Right lobe of liver (tissue), 6 donors: ENCODE measurements at regions of chr9 and their contacts with region 1.

Region 1: DNA sequence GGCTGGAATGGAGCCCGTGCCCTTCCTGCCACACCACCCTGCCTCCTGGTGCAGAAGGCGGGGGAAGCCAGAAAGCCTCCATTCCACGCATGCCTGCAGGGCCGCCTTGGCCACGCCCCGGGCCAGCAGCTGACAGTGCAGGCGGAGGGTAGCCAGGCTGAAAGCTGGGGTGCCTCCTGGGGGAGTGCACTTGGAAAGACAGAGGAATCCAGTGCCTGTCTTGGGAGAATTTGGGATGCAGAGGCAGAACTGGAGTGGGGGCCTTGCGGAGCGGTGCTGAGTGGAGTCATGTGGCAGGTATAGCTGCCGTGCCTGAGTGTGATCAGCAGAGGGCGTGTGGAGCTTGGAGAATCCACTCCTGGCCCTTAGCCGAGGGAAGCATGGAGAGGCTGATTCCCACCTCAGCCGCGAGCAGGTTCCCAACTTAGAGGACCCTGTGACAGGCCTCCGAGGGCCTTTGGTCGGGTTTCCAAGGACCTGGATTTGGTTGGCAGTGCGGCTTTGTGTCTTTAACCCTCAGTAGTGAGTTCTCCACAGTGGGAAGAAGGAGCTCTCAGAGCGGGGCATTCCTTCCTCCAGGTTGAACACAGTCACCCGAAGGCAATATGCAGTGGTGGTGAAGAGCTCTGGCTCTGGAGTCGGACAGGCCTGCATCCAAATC is 9.1 kb upstream of the URM1 start:
- DNase-seq: peak; percentile 80 to 84 (median 81)
- ATAC-seq: peak; percentile 94 to 97 (median 95)
- H3K4me3 ChIP-seq: peak overlapping the region; percentile 42 to 54 (median 43)
- H3K27ac ChIP-seq: no peak overlapping the region
- H3K4me1 ChIP-seq: peaks cover 0 to 11% (median 0%) of the 10 kb centered on the region in 4 donors
- H3K27me3 ChIP-seq: no peaks in the 10 kb centered on the region
- CTCF ChIP-seq: peak; percentile 80 to 87 (median 84)
- POLR2A ChIP-seq: no peak

Region 2: GRCh38 chr9:128067876-128068613 is 294.1 kb before region 1 on chr9 and contains the start of gene SLC25A25:
- intact Hi-C with region 1: no loop called
- DNase-seq: peak; percentile 100
- ATAC-seq: peak; percentile 84 to 92 (median 85)
- H3K4me3 ChIP-seq: peak within 1 kb of the TSS; percentile 86 to 96 (median 88)
- H3K27ac ChIP-seq: peak within 1 kb of the TSS; percentile 93 to 95 (median 94)
- H3K4me1 ChIP-seq: peaks cover 0 to 55% (median 23%) of the 10 kb centered on the region in 4 donors
- H3K27me3 ChIP-seq: no peaks in the 10 kb centered on the region
- CTCF ChIP-seq: peak in 1 of 4 donors; percentile 4
- POLR2A ChIP-seq: peak; percentile 97
- total RNA-seq, gene SLC25A25: 21.2 to 81.5 (median 53.3) TPM

Region 3: DNA sequence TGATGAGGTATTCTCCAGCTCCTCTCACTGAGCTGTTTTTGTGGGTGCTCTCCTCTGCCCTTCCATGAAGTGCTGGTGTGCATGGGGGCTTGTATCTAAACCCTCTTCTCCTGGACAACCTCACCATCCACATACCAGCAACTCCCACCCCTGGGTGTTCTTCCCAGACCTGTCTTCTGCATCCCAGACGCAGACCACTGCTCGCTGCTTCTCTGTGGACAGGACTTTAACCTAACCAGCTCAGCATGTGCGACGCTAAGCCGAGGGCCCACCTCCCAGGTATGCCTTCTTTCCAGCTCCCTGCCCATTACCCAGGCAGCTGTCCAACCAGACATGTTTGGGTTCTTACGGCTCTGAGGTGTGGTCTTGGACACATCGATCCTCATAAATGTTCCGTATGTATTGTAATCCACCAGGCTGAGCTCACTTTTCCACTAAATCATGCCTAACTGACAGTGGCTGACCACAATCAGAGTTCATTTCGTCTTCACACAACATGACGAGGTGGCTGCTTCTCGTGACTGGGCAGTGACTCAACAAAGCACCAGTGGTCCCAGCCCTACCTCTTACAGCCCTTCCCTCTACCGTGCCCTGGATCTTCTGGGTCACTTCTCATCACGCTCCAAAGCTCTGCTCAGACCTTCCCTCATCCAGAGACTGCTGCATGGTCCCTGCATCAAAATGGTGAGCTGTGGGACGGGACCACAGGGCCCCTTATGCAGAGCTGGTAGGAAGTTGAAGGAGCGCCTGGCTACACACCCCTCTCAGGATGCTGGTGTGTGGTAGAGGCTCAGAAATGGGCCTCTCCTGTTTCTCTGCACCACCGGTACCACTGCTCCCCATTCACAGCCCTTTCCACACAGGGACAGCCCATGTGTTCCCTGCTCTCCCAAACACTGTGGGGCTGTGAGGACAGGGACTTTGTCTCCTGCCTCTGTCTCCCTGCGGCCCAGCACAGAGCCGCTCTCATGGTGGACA is 225.0 kb before region 1 on chr9:
- intact Hi-C with region 1: no loop called
- DNase-seq: peak; percentile 8 to 42 (median 40)
- ATAC-seq: peak in 3 of 4 donors; percentile 7 to 10 (median 10)
- H3K4me3 ChIP-seq: no peak overlapping the region
- H3K27ac ChIP-seq: no peak overlapping the region
- H3K4me1 ChIP-seq: no peaks in the 10 kb centered on the region
- H3K27me3 ChIP-seq: no peaks in the 10 kb centered on the region
- CTCF ChIP-seq: no peak
- POLR2A ChIP-seq: no peak

Region 4: DNA sequence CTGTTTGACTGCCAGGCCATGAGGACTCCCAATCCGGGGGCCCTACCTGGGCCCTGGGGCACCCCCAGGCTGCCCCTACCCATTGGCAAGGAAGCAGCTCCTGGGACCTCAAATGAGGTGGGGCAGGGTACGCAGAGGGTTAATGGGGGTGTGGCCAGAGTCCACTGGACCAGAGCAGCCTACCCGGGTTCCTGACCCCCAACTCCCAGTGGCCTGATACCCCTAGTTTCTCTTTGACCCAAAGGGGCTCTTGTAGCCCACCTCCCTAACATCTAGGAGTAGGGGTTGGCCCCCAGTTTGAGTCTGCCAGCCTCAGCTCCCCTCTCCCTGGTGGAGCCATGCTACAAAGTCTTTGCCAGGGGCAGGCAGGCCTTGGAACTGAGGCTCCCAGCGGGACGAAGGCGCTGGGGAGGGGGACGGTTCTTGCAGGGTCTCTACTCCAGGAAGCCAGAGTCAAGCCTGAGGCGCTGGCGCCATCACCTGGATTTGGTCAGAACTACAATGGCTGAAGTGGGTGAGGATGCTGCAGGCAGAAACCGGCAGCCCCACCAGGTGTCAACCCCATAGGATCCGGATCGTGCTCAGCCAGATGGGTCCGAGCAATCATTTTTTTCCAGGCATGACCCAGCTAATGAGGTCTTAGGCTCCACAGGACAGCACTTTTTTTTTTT is 50.1 kb after region 1 on chr9:
- intact Hi-C with region 1: loop called in 1 of 2 experiments (anchors 10 kb)
- DNase-seq: no peak
- ATAC-seq: peak; percentile 37 to 46 (median 42)
- H3K4me3 ChIP-seq: no peak overlapping the region
- H3K27ac ChIP-seq: no peak overlapping the region
- H3K4me1 ChIP-seq: no peaks in the 10 kb centered on the region
- H3K27me3 ChIP-seq: no peaks in the 10 kb centered on the region
- CTCF ChIP-seq: peak; percentile 26 to 45 (median 36)
- POLR2A ChIP-seq: no peak